IMR-90 (cell line): ENCODE measurements at regions of chr9 and their contacts with region 1.

Region 1: DNA sequence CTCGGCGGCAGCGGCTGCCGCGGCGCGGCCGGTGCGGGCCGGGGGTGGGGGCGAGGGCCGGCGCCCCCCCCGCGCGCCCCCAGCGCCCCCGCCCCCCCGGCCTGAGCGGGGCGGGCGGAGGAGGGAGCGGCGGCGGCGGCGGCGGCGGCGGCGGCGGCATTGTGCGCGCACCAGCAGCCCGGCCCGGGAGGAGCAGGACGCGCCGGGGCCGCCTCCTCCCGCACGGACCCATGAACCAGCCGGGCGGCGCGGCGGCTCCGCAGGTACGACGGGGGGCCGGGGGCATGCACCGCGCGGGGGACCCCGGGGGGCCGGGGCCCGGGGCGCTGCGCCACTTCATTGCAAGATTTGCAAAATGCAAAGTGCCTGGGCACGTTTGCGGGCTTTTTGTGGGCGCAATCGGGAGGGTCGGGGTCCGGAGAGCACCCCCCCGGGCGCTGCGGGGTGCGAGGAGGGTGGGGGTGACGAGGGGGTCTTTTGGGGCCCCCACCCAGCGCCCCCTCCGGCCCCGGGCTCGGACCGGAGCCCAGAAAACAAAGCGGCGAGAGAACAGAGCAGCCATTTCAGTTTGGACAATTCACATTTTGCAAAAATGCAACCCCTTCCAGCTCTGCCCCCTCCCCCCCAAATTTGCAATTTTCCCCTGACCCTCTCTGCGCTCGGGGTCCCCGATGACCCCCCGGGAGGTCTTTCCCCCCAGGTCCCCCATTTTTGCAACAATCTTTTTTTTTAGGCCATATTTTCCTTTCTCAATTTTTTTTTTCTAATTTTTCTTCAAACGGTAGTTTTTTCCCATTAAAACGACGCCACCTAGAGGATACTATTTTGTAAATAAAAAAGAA is at the start of gene ZNF618:
- DNase-seq: peak; percentile 27
- ATAC-seq: peak; percentile 92
- H3K4me3 ChIP-seq: peak within 1 kb of the TSS; percentile 100
- H3K27ac ChIP-seq: peak within 1 kb of the TSS; percentile 99
- H3K4me1 ChIP-seq: peaks cover 5% of the 10 kb centered on the region
- H3K27me3 ChIP-seq: peaks cover 3% of the 10 kb centered on the region
- CTCF ChIP-seq: peak; percentile 45
- POLR2A ChIP-seq: no peak
- RAD21 ChIP-seq: no peak
- total RNA-seq, gene ZNF618: 7.5 and 8.2 TPM in 2 replicates

Region 2: DNA sequence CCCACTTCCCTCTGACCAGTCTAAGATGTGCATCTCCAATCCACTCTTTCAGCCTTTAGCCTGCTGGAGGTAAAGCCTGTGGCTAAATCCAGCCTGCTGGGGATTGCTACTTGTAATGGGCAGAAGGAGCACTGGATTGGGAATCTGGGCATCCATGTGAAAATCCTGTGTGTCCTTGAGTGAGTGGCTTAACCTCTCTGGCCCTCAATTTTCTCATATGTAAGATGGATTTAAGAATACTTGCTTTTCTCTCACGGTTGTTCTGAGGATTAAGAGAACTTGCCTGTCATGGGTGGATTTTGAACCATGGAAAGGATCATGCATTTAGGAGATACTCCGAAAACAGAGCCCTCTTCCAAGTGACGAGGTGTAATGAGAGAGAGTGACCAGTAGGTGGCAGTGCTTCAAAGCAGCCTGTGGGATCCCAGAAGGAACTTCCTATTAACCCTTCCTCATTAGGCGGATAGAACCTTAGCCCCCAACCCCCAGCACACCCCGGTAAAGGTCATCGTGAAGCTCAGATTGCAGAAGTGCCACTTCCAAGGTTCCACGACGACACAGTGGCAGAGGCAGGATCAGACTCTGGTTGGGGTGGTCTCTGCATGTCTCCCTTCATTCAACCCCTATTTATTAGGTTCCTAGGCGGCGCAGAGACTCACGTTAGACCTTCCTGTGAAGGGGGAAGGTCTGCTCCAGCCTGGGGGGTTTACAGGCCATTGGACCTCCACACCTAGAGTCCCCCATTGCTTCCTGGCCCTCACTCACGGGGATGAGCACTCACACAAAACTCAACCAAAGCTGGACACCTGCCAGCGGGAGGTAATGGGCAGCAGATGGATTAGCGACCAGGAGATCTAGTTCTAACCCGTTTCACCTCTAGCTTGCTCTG is 69.0 kb before region 1 on chr9:
- CTCF ChIA-PET with region 1: interaction called, 3 read pairs
- POLR2A ChIA-PET with region 1: no interaction called
- dilution Hi-C with region 1: no loop called
- in situ Hi-C with region 1: no loop called
- intact Hi-C with region 1: loop called (anchors 5 kb)
- DNase-seq: peak; percentile 60
- ATAC-seq: peak; percentile 95
- H3K4me3 ChIP-seq: no peak overlapping the region
- H3K27ac ChIP-seq: no peak overlapping the region
- H3K4me1 ChIP-seq: no peaks in the 10 kb centered on the region
- H3K27me3 ChIP-seq: peaks cover 4% of the 10 kb centered on the region; the same call in 1 of the 2 replicates
- CTCF ChIP-seq: peak; percentile 83
- POLR2A ChIP-seq: no peak
- RAD21 ChIP-seq: peak; percentile 84

Region 3: DNA sequence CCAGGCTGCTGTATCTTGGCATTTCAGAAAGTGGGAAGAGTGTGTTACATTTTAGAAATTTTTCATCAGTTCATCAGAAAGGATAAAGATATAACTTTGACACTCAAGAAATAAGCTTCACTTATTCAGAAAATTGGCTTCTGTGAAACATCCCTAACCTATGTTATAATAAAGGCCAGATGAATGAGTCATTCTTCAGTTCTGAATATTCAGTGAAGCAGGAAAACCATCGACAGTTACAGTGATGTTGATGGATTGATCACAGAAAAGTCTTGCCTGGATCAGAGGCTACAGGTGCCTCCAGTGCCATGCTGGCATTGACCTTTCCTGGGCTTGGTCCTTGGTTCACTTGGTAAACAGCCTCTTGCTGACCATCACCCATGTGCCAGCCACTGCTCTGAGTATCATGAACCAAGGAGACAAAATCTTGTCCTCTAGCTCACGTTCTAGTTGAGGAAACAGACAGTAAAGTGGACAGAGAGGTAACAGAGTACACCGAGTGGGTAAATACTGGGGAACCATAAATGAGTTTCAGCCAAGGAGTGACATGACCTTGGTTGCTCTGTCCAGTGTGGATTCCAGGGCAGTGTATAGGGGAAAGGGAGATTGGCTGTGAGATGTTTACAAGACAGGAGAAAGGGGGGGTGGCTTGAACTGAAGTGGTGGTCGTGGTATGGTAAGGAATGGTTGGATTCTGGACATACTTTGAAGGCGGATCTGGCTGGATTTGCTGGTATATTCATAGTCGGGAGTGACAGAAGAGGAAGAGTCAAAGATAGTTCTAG is 103.2 kb after region 1 on chr9:
- CTCF ChIA-PET with region 1: no interaction called
- POLR2A ChIA-PET with region 1: no interaction called
- dilution Hi-C with region 1: no loop called
- in situ Hi-C with region 1: no loop called
- intact Hi-C with region 1: loop called (anchors 5 kb)
- DNase-seq: peak; percentile 47
- ATAC-seq: peak; percentile 62
- H3K4me3 ChIP-seq: no peak overlapping the region
- H3K27ac ChIP-seq: no peak overlapping the region
- H3K4me1 ChIP-seq: peaks cover 21% of the 10 kb centered on the region
- H3K27me3 ChIP-seq: no peaks in the 10 kb centered on the region
- CTCF ChIP-seq: no peak
- POLR2A ChIP-seq: no peak
- RAD21 ChIP-seq: no peak